Activated CD4-positive, alpha-beta memory T cell treated with anti-CD3 and anti-CD28 coated beads for 36 hours (primary cell): ENCODE measurements at regions of chr6 and their contacts with region 1.

Region 1: DNA sequence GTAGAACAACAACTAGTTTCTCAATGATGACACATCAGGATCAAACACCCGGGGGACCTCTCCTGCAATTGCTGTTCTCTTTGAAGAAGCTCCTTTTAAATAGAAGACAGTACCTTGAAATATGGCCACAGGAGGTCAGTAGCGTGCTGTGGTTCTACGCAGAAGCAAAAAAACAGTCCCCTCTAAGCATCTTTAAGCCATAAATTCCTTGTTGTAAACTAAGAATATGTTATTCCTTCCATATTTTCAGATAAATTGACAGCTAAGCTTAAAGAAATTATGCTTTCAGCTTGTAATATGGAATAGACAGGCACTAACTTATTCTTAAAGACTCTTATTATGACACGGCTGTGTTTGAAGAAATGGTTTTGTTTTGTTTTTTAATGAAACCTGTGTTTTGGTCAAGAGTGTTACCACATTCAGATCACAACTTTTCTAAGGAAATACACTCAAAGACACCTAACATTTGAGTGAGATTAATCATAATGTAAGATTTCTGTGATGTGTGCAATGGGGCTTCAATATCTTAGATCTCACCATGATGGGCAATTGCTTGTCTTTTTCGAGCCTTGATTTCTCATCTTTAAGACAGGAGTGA is 49.7 kb upstream of the IL20RA start:
- DNase-seq: peak; percentile 68
- H3K4me3 Mint-ChIP-seq: no peak overlapping the region
- H3K27ac Mint-ChIP-seq: no peak overlapping the region
- H3K4me1 Mint-ChIP-seq: peaks cover 22% of the 10 kb centered on the region
- H3K27me3 Mint-ChIP-seq: peaks cover 2% of the 10 kb centered on the region

Region 2: DNA sequence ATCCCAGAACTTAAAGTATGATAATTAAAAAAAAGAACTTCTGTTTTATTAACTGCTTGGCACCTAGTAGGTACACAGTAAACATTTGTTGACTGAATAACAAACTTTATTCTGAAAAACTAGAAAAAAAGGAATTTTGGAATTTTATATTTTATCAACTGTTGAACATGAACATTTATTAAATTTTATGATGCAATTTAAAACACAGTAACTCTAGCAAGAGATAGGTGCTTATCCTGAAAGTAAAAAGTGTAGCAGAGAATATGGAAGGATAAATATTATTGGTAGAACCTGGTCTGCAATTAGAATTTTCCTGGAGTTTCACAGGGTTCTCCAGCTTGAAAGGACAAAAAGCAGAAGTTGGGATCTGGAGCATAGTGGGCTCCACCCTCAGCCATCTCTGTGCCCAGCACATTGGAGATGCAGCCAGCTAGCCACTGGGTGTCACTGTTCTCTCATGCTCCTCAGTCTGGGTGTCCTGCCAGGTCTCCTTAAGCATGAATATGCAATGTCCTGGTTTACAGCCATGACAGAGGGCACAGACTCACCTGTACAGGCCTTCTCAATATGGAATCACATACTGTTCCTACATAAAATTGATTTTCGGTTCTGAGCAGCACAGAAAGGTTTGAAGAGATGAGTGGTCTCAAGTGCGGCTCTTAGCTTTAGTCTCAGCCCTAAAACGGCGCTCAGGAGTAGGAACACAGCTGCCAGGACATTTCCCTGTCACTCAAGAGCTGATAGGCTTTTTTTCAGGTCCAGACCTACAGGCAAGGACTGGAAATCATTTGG is 18.0 kb before region 1 on chr6:
- CTCF ChIA-PET with region 1: interaction called, 16 read pairs
- POLR2A ChIA-PET with region 1: no interaction called
- intact Hi-C with region 1: no loop called
- DNase-seq: peak; percentile 76
- H3K4me3 Mint-ChIP-seq: no peak overlapping the region
- H3K27ac Mint-ChIP-seq: no peak overlapping the region
- H3K4me1 Mint-ChIP-seq: no peaks in the 10 kb centered on the region
- H3K27me3 Mint-ChIP-seq: peaks cover 17% of the 10 kb centered on the region

Region 3: DNA sequence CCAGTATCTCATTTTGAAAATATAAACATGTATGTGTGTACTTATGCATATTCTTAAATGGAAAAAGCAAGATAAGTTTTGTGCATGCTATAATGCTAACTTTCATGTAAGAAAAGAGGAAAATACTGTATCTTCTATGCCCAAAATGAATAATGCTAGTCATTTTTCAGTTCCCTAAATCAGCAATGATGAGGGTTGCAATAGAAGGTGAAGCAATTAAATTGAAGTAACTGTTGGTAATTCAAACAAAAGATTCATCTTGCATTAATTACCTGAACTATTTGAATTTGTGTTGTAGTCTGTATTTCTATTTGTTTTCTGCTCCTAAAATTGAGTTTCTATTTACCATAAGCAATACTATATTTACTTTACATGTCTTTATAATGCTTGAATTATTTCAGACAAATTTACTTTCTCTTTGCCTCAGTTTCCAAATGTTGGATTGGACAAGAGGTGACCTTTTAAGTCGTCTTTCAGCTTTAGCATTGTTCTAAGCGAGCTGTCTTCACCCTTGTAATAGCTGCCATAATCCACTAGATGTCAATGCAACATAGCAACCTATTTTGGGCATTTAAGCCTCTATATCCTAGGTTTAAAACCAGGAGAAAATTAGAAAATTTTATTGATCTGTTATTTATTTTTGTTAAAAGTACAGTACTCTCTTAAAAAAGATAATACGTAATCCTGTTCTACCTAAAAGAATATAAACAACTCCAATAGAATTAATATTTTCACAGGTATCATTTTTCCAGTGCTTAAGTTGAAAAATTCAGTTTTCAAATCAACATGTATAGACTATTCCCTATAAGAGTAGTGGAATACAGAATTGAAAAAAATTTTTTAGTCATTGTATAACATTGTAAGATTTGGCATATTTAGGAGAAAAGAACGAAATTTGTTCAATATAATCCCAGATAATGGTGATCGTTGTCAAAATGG is 177.0 kb after region 1 on chr6:
- CTCF ChIA-PET with region 1: interaction called, 9 read pairs
- POLR2A ChIA-PET with region 1: no interaction called
- intact Hi-C with region 1: loop called (anchors 1 kb)
- DNase-seq: no peak
- H3K4me3 Mint-ChIP-seq: no peak overlapping the region
- H3K27ac Mint-ChIP-seq: no peak overlapping the region
- H3K4me1 Mint-ChIP-seq: peaks cover 10% of the 10 kb centered on the region
- H3K27me3 Mint-ChIP-seq: peaks cover 5% of the 10 kb centered on the region